ENCODE measurements at regions of chr1 and their contacts with region 1.

Region 1: GRCh38 chr1:157992031-157992832 is 1.2 kb upstream of the KIRREL1 start:
- DNase-seq: peak; percentile 84
- ATAC-seq: peak; percentile 47
- H3K4me3 ChIP-seq: peak overlapping the region; percentile 96; the same call in 1 of the 2 replicates
- H3K27ac ChIP-seq: no peak overlapping the region
- H3K4me1 ChIP-seq: peaks cover 27% of the 10 kb centered on the region
- H3K27me3 ChIP-seq: peaks cover 15% of the 10 kb centered on the region; the same call in 1 of the 2 replicates
- CTCF ChIP-seq: peak; percentile 99

Region 2: DNA sequence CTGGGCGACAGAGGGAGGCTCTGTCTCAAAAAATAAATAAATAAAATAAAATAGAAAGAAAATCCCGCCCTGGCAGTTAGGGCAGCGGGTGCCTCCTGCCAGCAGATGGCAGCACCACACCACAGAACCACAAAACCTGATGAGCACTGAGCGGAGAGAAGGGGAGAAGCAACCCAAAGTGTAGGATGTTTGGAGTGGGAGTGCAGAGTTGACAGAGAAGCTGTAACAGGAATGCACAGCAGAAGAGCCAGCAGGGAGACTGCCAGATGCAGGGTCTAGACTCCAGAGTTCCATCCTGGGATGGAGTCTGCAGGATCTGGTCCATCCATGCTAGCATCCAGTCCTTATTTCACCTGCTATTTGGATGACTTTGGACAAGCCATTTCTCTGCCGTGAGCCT is 28.5 kb before region 1 on chr1:
- CTCF ChIA-PET with region 1: interaction called, 4 read pairs
- POLR2A ChIA-PET with region 1: no interaction called
- intact Hi-C with region 1: loop called (anchors 1 kb)
- DNase-seq: peak; percentile 87
- ATAC-seq: peak; percentile 81
- H3K4me3 ChIP-seq: no peak overlapping the region
- H3K27ac ChIP-seq: no peak overlapping the region
- H3K4me1 ChIP-seq: peaks cover 22% of the 10 kb centered on the region
- H3K27me3 ChIP-seq: peaks cover 24% of the 10 kb centered on the region
- CTCF ChIP-seq: peak; percentile 87

Region 3: DNA sequence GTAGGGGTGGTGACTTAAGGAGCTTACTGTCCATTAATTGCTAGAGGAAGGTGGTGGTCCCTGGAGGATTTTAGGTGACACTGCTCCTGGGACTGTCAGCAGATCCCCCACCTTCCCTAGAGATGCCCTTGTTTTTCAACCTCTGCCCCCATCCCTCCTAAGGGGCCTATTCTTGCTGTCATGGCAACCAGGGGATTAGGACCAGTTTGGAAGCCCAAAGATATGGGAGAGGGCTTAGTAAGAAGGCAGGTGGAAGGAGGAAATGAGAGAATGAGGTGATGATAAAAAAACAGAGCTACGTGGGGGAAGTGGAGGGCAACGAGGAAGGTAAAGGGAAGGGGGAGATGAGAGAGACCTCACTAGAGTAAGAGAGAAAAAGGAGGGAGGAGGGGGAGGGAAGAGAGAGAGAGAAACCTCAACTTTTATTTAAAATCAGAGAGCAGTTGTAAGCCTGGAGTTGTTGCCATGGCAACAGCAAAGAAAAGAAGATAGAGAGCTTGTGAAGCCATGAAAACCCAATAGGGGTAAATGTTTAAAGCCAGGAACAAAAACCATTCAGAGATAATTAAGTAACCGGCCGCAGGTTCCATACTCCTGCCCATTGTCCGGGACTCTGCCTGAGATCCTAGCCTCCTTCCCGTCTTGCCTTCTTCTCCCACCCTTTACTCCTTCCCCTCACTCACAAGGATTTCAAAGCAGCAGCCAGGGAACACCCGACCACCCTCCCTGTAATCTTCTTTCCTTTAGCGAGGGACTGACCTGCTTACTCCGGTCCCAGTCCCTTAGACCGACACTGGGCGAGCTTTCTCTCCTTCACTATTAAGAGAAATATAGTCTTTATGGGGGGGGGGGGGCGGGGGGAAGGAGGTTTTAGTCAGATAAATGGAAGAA is 21.9 kb after region 1 on chr1:
- CTCF ChIA-PET with region 1: interaction called, 12 read pairs
- POLR2A ChIA-PET with region 1: interaction called, 11 read pairs
- intact Hi-C with region 1: loop called (anchors 1 kb)
- DNase-seq: no peak
- ATAC-seq: no peak
- H3K4me3 ChIP-seq: no peak overlapping the region
- H3K27ac ChIP-seq: no peak overlapping the region
- H3K4me1 ChIP-seq: peaks cover 65% of the 10 kb centered on the region
- H3K27me3 ChIP-seq: no peaks in the 10 kb centered on the region
- CTCF ChIP-seq: no peak

Region 4: DNA sequence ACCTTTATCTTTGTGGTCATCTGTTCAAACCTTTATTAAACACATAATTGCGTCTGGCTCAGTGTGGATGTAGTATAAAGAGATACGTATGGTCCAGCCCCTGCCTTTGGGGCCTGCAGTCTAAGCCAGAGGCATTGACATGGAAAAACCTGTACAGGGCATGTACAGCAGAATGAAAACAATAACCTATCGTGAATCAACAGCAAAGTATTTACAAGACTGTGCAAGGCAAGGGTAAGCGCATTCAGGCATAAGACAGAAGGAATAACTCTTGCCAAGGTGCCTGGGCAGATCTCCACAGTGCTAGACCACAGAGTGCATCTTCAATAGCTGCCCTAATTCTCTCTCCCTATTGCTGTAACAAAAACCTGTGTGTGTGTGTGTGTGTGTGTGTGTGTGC is 36.7 kb after region 1 on chr1:
- CTCF ChIA-PET with region 1: interaction called, 3 read pairs
- POLR2A ChIA-PET with region 1: no interaction called
- intact Hi-C with region 1: loop called (anchors 1 kb)
- DNase-seq: peak; percentile 88
- ATAC-seq: peak; percentile 92
- H3K4me3 ChIP-seq: no peak overlapping the region
- H3K27ac ChIP-seq: 0 out of 2 replicates have a peak overlapping the region, but pooled peaks have one; percentile 3
- H3K4me1 ChIP-seq: peaks cover 47% of the 10 kb centered on the region
- H3K27me3 ChIP-seq: no peaks in the 10 kb centered on the region
- CTCF ChIP-seq: no peak

Region 5: GRCh38 chr1:158087320-158087927 is 95.2 kb after region 1 on chr1:
- CTCF ChIA-PET with region 1: interaction called, 20 read pairs
- POLR2A ChIA-PET with region 1: no interaction called
- intact Hi-C with region 1: loop called (anchors 1 kb)
- DNase-seq: peak; percentile 87
- ATAC-seq: peak; percentile 87
- H3K4me3 ChIP-seq: no peak overlapping the region
- H3K27ac ChIP-seq: no peak overlapping the region
- H3K4me1 ChIP-seq: no peaks in the 10 kb centered on the region
- H3K27me3 ChIP-seq: no peaks in the 10 kb centered on the region
- CTCF ChIP-seq: peak; percentile 100

Region 6: GRCh38 chr1:158149577-158150269 is 157.5 kb after region 1 on chr1:
- CTCF ChIA-PET with region 1: no interaction called
- POLR2A ChIA-PET with region 1: no interaction called
- intact Hi-C with region 1: no loop called
- DNase-seq: peak; percentile 73
- ATAC-seq: peak; percentile 86
- H3K4me3 ChIP-seq: peak overlapping the region; percentile 19
- H3K27ac ChIP-seq: no peak overlapping the region
- H3K4me1 ChIP-seq: no peaks in the 10 kb centered on the region
- H3K27me3 ChIP-seq: peaks cover 75% of the 10 kb centered on the region
- CTCF ChIP-seq: no peak

Measured in PC-3 (cell line).